Activated CD4-positive, alpha-beta T cell treated with anti-CD3 and anti-CD28 coated beads for 36 hours (primary cell): ENCODE measurements at regions of chr15 and their contacts with region 1.

Region 1: DNA sequence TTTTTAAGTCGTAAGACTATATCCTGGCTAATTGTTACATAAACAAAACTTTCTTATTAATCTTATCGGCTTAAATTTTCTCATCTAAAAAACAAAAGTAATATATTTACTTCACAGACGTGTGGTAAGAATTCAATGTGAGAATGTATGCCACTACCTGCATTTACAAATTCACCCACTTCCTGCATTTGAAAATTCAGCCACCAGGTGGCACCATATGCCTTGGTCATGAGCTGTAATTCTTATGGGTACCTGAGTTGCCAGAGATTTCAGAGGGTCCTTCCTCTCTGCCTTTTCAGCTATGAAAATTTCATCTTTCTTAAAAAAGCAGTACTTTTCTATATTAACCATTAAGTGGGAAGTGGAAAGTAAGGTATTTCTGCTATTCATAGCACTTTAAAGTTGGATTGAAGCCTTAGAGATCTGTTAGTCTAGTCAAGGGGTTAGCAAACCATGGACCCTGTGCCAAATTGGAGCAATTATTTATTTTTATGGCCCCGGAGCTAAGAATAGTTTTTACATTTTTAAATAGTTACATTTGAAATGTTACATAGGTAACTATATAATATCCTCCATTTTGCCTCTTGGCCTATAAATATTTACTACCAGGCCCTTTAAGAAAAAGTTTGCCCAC is 127.8 kb downstream of the HCN4 start:
- DNase-seq: peak; percentile 84
- ATAC-seq: no peak
- H3K4me3 Mint-ChIP-seq: no peak overlapping the region
- H3K27ac Mint-ChIP-seq: no peak overlapping the region
- H3K4me1 Mint-ChIP-seq: no peaks in the 10 kb centered on the region
- H3K27me3 Mint-ChIP-seq: no peaks in the 10 kb centered on the region

Region 2: GRCh38 chr15:72722071-72722696 is 518.8 kb before region 1 on chr15:
- CTCF ChIA-PET with region 1: interaction called, 5 read pairs
- POLR2A ChIA-PET with region 1: no interaction called
- intact Hi-C with region 1: loop called in 1 of 2 experiments (anchors 1 kb)
- DNase-seq: peak; percentile 85
- ATAC-seq: peak; percentile 42
- H3K4me3 Mint-ChIP-seq: no peak overlapping the region
- H3K27ac Mint-ChIP-seq: no peak overlapping the region
- H3K4me1 Mint-ChIP-seq: no peaks in the 10 kb centered on the region
- H3K27me3 Mint-ChIP-seq: no peaks in the 10 kb centered on the region

Region 3: DNA sequence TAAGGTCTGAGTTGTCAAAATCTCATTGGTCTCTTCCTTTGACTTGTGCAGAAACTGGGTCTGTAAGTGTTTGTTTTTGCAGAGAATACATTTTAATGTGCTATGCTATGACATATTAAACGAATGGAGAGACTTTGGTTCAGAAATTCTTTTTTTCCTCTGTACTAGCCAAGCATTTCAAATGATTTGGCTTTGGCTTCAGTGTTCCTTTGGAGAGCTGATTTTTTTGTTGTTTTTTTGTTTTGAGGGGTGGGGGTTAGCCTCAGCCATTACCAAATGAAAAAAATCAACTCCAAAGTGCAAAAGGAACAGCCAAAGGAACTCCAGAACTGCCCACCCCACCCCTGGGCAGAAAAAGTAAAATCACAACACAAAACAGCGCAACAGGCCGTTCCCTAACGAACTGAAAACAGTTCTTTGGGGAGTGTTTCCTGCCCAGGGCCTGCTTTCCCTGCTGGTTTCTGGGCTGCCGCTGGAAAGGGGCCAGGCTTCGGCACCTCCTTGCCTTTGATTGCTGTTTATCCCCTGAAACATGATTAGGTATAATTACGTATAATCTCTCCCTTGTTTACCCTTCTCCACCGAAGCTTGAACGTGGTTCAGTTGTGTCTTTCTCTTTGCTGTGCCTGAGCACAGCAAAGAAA is 246.3 kb before region 1 on chr15:
- CTCF ChIA-PET with region 1: no interaction called
- POLR2A ChIA-PET with region 1: no interaction called
- intact Hi-C with region 1: no loop called
- DNase-seq: no peak
- ATAC-seq: no peak
- H3K4me3 Mint-ChIP-seq: no peak overlapping the region
- H3K27ac Mint-ChIP-seq: no peak overlapping the region
- H3K4me1 Mint-ChIP-seq: no peaks in the 10 kb centered on the region
- H3K27me3 Mint-ChIP-seq: peaks cover 13% of the 10 kb centered on the region

Region 4: DNA sequence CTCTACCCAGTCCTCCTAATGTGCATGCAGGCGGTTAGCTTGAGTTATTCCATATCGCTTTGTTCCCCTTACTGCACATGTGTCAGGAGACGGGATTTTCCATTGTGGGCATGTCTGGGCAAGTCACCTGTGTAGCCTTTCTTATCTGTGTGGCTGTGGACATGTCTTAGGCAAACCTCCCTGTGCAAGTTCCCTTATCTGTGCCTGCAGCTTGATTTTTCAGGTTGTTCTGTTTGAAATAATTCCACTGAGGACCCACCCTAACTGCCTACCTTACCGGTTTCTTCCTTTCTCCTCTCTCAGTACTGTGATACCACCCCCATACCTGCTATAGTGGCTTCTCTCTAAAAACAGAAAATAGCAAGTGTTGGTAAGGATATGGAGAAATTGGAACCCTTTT is 75.1 kb before region 1 on chr15:
- CTCF ChIA-PET with region 1: no interaction called
- POLR2A ChIA-PET with region 1: no interaction called
- intact Hi-C with region 1: no loop called
- DNase-seq: no peak
- ATAC-seq: no peak
- H3K4me3 Mint-ChIP-seq: no peak overlapping the region
- H3K27ac Mint-ChIP-seq: no peak overlapping the region
- H3K4me1 Mint-ChIP-seq: no peaks in the 10 kb centered on the region
- H3K27me3 Mint-ChIP-seq: no peaks in the 10 kb centered on the region

Region 5: DNA sequence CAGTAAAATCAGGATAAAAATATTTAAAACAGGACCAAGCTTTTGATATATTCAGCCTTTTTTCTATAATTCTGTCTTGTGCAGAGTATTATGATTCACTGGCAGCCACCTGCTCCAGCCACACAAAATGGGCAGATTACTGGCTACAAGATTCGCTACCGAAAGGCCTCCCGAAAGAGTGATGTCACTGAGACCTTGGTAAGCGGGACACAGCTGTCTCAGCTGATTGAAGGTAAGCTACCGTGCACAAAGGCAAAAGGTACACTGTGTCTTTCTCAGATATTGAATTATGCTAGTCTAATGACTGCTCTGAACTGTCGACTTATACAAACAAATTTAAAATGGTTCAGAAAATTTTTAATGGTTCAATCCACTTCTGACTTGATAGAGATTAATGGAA is 13.6 kb after region 1 on chr15:
- CTCF ChIA-PET with region 1: interaction called, 13 read pairs
- POLR2A ChIA-PET with region 1: no interaction called
- intact Hi-C with region 1: no loop called
- DNase-seq: no peak
- ATAC-seq: no peak
- H3K4me3 Mint-ChIP-seq: no peak overlapping the region
- H3K27ac Mint-ChIP-seq: no peak overlapping the region
- H3K4me1 Mint-ChIP-seq: peaks cover 8% of the 10 kb centered on the region
- H3K27me3 Mint-ChIP-seq: no peaks in the 10 kb centered on the region

Region 6: DNA sequence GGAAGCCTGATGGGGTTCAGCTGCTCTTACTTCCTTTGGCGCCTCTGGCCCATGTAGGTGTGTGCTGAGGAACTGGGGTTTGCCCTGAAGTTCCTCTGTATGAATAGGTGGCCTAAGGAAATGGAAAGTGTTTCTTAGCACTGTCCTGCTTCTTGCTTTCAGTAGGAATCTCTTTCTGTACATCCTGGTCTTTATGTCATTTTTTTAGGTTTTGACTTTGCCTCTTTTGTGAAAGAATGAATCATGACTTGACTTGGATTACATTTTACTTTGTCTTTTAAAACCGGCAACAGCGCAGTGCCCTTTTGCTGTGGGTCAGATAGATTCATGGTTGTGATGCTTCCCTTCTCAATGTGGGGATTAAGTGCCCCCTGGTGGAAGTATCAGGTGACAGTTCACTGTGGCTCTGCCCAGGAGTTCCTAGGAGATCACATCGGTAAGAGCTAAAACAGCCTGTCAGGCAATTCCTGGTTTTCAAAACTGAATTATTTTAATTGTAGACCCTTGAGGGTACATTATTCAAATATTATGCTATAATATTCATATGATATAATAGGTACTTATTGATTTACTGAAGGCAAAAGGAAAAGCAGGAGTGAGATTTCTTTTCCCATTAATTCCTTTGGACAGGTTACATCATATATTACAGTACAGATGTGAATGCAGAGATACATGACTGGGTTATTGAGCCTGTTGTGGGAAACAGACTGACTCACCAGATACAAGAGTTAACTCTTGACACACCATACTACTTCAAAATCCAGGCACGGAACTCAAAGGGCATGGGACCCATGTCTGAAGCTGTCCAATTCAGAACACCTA is 32.4 kb after region 1 on chr15:
- CTCF ChIA-PET with region 1: interaction called, 83 read pairs
- POLR2A ChIA-PET with region 1: no interaction called
- intact Hi-C with region 1: loop called (anchors 1 kb)
- DNase-seq: peak; percentile 64
- ATAC-seq: peak; percentile 90
- H3K4me3 Mint-ChIP-seq: no peak overlapping the region
- H3K27ac Mint-ChIP-seq: no peak overlapping the region
- H3K4me1 Mint-ChIP-seq: peaks cover 4% of the 10 kb centered on the region
- H3K27me3 Mint-ChIP-seq: no peaks in the 10 kb centered on the region